Breast epithelium (tissue), 4 donors: ENCODE measurements at regions of chr17 and their contacts with region 1.

Region 1: DNA sequence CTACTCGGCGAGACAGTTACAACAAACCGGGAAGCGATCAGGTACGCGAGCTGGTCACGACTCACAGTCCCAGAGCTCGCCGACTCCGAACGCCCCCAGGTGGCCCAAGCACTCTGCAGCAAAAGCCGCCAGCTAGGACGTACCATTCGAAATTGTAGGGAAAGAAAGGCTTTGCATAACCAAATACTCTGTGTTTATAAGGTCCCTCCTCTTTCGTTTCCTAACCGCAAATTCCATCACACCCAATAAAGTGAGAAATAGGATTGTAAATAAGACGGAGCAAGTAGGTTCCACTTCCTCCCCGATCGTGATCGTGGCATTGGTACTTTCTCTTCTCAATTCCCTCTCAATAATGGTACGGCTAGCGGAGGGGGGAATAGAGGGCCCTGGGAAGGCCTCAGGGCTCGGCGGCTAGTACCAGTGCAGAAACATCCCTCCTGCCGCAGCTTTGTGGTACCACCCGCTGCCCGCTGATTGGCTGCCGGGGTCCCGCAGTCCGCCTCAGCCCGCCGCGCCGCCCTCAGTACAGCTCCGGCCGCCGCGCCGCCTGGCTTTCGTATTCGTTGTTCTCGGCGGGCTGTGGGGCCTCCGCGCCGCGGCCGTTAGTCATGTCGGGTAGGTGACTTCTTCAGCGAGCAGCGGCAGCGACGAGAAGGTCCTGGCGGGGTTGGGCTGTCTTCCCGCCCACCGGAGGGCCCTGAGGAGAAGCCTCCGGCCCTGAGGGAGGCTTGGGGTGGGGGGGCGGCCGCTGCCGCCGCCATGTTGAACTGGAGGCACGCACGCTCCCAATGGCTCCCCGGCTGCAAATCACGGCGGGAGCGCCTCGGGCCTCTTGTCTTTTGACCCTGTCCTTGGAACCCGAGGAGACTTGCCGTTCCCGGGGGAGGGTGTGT is at the start of gene TAF15:
- DNase-seq: peak; percentile 96
- H3K4me3 ChIP-seq: peak within 1 kb of the TSS; percentile 65 to 89 (median 83)
- H3K27ac ChIP-seq: peak within 1 kb of the TSS; percentile 92 to 97
- H3K4me1 ChIP-seq: peaks cover 0 to 4% of the 10 kb centered on the region in 2 donors
- H3K27me3 ChIP-seq: no peaks in the 10 kb centered on the region
- CTCF ChIP-seq: peak; percentile 69 to 81 (median 70)
- POLR2A ChIP-seq: peak; percentile 98
- total RNA-seq, gene TAF15: 65.5 to 76.8 (median 72.8) TPM

Region 2: DNA sequence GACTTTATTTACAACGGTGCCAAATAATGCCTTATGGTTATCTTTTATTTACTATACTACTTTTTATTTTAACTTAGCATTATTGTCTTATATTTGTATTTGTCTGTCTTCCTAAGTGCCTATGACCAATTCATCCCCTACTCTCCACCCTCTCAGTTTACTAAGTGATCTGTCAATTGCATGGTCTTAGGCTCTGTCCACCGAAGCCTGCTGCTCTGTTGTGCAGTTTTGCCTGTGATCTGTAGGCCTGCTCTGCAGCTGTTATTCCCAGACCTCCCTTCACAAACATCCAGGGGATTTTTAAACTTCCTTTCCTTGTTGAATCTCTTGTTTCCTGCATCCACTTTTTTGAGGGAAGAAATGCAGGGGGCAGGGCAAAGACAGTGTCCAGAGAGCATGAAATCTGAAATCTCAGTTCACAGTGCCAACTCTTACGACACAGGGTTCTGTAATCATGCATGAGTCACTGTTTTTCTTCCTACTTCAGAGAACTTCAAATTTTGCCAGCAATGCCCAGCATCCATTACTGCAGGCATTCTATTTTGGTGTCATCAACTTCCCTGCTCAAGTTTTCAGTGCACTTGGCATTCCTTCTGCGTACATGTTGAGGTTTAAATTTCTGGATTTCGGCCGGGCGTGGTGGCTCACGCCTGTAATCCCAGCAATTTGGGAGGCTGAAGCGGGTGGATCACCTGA is 555.0 kb before region 1 on chr17:
- intact Hi-C with region 1: no loop called
- DNase-seq: peak in 1 of 2 donors; percentile 60
- H3K4me3 ChIP-seq: no peak overlapping the region
- H3K27ac ChIP-seq: peak overlapping the region; percentile 71 to 76
- H3K4me1 ChIP-seq: peaks cover 0 to 11% of the 10 kb centered on the region in 2 donors
- H3K27me3 ChIP-seq: no peaks in the 10 kb centered on the region
- CTCF ChIP-seq: no peak
- POLR2A ChIP-seq: no peak

Region 3: GRCh38 chr17:35766903-35767510 is 42.2 kb before region 1 on chr17:
- intact Hi-C with region 1: loop called (anchors 5 kb)
- DNase-seq: no peak
- H3K4me3 ChIP-seq: no peak overlapping the region
- H3K27ac ChIP-seq: no peak overlapping the region
- H3K4me1 ChIP-seq: no peaks in the 10 kb centered on the region
- H3K27me3 ChIP-seq: no peaks in the 10 kb centered on the region
- CTCF ChIP-seq: peak in 2 of 3 donors; percentile 38 to 40
- POLR2A ChIP-seq: no peak